ENCODE measurements at regions of chr2 and their contacts with region 1.

Region 1: DNA sequence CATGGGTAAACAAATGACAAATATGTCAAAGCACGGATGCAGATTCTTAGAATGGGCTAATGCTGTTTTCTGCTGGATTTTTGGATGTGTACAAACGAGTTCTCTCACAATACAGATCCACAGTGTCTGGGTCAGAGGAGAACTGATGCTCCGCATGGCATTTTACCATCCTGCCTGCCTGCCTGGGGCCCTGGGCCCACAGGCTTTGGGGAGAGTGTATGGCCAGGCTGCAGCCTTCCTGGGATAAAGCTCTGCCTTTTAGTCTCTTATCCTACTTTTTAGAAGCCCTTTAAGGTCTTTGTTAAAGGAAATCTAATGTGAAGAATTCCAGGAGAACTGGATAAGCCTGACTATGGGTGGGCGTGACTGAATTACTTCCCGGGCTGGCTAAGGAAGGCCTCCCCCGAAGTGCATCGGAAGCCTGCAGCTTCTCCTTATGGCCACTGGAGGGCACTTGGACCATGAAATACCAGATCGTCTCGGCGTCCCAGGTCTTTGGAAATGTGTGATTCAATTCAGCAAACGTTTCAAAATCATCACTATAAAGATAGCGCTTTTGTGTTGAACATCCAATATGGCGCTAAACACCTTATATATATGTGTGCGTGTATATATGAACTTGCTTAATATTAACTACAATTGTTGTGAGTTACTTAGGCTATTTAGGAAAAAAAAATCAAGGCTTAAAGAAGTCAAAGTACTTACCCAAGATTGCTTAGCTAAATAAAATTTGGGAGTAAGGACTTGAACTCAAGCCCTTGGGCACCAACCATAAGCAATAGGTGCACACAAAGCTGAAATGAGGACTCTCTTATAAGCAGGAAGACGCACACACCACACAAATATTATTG is 15.2 kb upstream of the DNPEP start:
- DNase-seq: peak; percentile 42
- ATAC-seq: peak; percentile 80
- H3K4me3 ChIP-seq: no peak overlapping the region
- H3K27ac ChIP-seq: no peak overlapping the region; the same call in 1 of the 2 replicates
- H3K4me1 ChIP-seq: peaks cover 36% of the 10 kb centered on the region
- H3K27me3 ChIP-seq: no peaks in the 10 kb centered on the region
- CTCF ChIP-seq: peak; percentile 95

Region 2: GRCh38 chr2:219362524-219363164 is 40.2 kb before region 1 on chr2:
- CTCF ChIA-PET with region 1: no interaction called
- POLR2A ChIA-PET with region 1: no interaction called
- in situ Hi-C with region 1: no loop called
- intact Hi-C with region 1: no loop called
- DNase-seq: no peak
- ATAC-seq: peak; percentile 64
- H3K4me3 ChIP-seq: no peak overlapping the region
- H3K27ac ChIP-seq: peak overlapping the region; percentile 55; the same call in 1 of the 2 replicates
- H3K4me1 ChIP-seq: peaks cover 5% of the 10 kb centered on the region
- H3K27me3 ChIP-seq: no peaks in the 10 kb centered on the region; the same call in 1 of the 2 replicates
- CTCF ChIP-seq: no peak

Region 3: GRCh38 chr2:219447242-219448098 is 44.6 kb after region 1 on chr2:
- CTCF ChIA-PET with region 1: interaction called, 13 read pairs
- POLR2A ChIA-PET with region 1: no interaction called
- in situ Hi-C with region 1: no loop called
- intact Hi-C with region 1: no loop called
- DNase-seq: no peak
- ATAC-seq: no peak
- H3K4me3 ChIP-seq: no peak overlapping the region
- H3K27ac ChIP-seq: no peak overlapping the region
- H3K4me1 ChIP-seq: peaks cover 2% of the 10 kb centered on the region; the same call in 1 of the 2 replicates
- H3K27me3 ChIP-seq: no peaks in the 10 kb centered on the region
- CTCF ChIP-seq: no peak

Region 4: DNA sequence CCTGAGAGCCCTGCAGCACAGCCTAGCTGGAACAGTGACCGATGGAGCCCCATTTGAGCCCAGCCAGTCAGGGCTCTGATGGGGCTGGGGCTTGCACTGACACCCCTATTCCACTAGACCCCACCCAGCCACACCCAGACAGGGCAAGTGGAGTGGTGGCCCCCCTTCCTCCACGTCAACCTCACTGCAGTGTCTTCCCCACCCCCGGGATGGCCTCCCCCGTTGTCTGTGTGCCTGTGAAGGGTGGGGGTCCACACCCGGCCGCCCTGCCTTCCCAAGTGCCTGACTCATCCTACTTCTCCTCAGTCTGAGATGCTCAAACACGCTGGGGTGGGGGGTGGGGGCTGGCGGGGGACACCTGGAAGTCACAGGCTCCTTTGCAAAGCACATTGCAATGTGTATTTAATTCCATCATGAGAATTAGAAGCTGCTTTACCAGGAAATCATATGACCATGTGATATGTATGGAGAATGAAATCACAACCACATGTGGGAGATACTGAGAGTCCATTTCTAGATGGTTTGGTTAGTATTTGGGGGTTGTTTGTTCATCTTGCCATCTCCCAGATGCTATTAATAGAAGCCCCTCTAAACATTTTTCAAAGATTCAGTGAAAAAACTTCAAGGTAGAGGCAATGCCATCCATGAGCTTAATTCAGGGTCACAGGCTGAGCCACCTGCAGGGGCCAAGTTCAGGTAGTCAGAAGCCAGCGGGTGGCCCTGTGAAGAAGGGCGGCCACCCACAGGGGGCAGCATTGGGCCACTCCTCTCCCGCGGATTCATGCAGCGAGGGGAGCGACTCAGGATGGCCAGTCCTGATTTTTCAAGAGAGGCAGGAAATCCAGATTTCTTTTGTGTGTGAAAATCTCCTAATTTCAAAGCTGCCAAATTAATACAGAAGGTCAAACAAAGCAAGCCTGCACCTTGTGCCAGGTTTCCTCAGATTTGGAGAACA is 73.1 kb after region 1 on chr2:
- CTCF ChIA-PET with region 1: interaction called, 12 read pairs
- POLR2A ChIA-PET with region 1: no interaction called
- in situ Hi-C with region 1: no loop called
- intact Hi-C with region 1: no loop called
- DNase-seq: no peak
- ATAC-seq: peak; percentile 88
- H3K4me3 ChIP-seq: peak overlapping the region in 1 of 2 experiments; percentile 32; a peak in 1 of 4 replicates
- H3K27ac ChIP-seq: no peak overlapping the region
- H3K4me1 ChIP-seq: no peaks in the 10 kb centered on the region
- H3K27me3 ChIP-seq: no peaks in the 10 kb centered on the region
- CTCF ChIP-seq: peak; percentile 96

Region 5: DNA sequence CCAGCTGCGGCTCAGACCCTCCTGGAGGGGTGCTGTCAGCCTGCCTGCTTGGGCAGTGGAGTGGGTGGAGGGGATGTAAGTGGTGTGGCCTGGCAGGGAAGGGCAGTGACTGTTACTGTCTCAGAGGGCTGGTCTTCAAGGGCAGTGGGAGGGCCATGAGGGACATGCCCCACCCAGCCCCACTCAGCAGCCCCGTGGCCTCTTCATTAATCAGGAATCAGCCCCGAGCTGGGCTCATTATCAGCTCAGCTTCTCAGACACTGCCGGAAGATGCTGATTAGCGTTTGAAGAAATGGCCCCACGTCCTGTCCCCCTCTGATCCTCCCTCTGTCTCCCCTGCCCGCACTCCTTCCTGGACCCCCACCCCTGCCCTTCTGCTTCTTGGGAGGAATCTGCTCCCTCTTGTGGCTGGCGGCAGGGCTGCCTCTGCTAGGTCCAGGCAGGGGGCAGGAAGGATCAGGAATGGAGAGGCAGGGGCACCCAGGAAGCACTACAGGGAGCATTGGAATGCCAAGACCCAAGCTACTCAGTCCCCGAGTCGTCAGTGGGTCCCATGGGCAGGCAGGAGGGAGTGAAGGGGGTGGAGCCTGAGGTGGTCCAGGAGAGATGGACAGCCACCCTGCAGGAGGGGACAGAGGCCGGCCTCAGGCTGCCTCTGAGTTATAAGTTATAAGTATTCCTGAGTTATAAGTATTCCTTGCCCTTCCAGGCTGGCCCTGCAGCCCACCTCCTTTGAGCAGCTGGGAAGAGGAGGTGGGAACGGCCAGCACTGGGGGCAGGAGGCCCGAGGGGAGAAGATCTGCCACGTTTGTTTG is 118.4 kb after region 1 on chr2:
- CTCF ChIA-PET with region 1: interaction called, 12 read pairs
- POLR2A ChIA-PET with region 1: no interaction called
- in situ Hi-C with region 1: no loop called
- intact Hi-C with region 1: no loop called
- DNase-seq: no peak
- ATAC-seq: peak; percentile 77
- H3K4me3 ChIP-seq: no peak overlapping the region
- H3K27ac ChIP-seq: no peak overlapping the region
- H3K4me1 ChIP-seq: peaks cover 10% of the 10 kb centered on the region
- H3K27me3 ChIP-seq: no peaks in the 10 kb centered on the region
- CTCF ChIP-seq: peak; percentile 88